ENCODE measurements at regions of chr6 and their contacts with region 1.

Region 1: GRCh38 chr6:166999145-166999883 is at the start of gene CEP43:
- DNase-seq: peak; percentile 77 to 96
- H3K4me3 ChIP-seq: peak within 1 kb of the TSS; percentile 72 to 96
- H3K27ac ChIP-seq: peak within 1 kb of the TSS; percentile 24 to 52
- H3K4me1 ChIP-seq: peaks cover 7 to 12% of the 10 kb centered on the region in 2 donors
- H3K27me3 ChIP-seq: no peaks in the 10 kb centered on the region
- CTCF ChIP-seq: no peak
- total RNA-seq, gene CEP43: 10.7 TPM

Region 2: DNA sequence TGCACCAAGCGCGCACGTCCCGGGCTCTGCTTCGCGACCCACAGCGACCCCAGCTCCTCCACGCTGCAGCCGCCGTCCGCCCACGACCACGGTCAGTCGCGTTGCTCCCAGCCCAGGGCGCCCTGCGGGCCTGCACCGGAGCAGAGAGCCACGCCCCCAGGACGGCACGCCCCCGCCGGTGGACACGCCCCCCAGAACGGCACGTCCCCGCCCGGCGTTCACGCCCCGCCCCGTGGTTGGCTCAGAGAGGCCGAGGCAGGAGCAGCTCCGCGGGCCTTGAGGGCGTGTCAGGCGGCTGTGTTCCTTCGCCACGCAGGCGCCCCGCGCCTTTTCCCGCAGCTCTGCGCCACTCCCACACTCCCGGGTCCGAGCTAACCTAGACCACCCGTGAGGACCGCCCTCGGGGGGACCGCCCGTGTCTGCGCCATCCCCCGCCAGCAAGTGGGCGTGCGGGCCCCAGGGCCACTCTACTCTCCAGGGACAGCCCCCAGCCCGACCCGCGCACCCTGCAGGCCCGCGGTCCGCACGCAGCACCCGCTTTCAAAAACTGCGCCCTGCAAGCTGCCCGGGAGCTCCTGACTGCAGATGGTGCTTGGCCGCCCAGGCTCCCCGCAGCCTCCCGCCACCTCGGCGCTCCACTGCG is 42.7 kb before region 1 on chr6 and contains the start of gene RNASET2:
- intact Hi-C with region 1: loop called (anchors 1 kb)
- DNase-seq: peak; percentile 78 to 98
- H3K4me3 ChIP-seq: peak within 1 kb of the TSS; percentile 75 to 88
- H3K27ac ChIP-seq: peak within 1 kb of the TSS; percentile 73 to 86
- H3K4me1 ChIP-seq: peaks cover 0 to 5% of the 10 kb centered on the region in 2 donors
- H3K27me3 ChIP-seq: no peaks in the 10 kb centered on the region
- CTCF ChIP-seq: no peak
- total RNA-seq, gene RNASET2: 51.9 TPM